Left ventricle myocardium inferior (tissue), 1 donor: ENCODE measurements at regions of chr2 and their contacts with region 1.

Region 1: DNA sequence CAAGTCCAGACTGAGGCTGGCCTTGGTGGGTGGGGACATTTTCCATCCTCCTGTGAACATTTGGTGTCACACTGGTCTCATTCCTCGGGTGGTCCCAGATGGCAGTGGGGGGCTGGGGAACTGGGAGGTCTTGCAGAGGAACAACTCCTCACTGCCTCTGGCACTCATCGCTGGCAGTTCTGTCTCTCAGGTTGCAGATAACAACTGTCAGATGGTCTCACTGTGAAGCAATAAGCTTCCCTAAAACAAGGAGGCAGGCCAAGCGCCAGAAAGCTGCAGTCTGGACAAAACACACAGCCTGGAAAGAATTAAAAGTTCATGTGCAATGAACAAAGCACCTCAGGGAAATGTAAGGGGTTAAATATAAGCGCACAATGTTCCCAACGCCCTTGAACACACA is 78.1 kb downstream of the IRS1 start:
- DNase-seq: peak; percentile 57
- H3K4me3 ChIP-seq: no peak overlapping the region
- H3K27ac ChIP-seq: no peak overlapping the region
- H3K4me1 ChIP-seq: peaks cover 35% of the 10 kb centered on the region
- H3K27me3 ChIP-seq: no peaks in the 10 kb centered on the region
- CTCF ChIP-seq: no peak

Region 2: GRCh38 chr2:226782092-226782713 is 60.7 kb after region 1 on chr2:
- intact Hi-C with region 1: loop called (anchors 10 kb)
- DNase-seq: no peak
- H3K4me3 ChIP-seq: no peak overlapping the region
- H3K27ac ChIP-seq: peak overlapping the region; percentile 59
- H3K4me1 ChIP-seq: peaks cover 55% of the 10 kb centered on the region
- H3K27me3 ChIP-seq: no peaks in the 10 kb centered on the region
- CTCF ChIP-seq: no peak

Region 3: GRCh38 chr2:226845386-226846116 is 124.0 kb after region 1 on chr2:
- intact Hi-C with region 1: no loop called
- DNase-seq: no peak
- H3K4me3 ChIP-seq: no peak overlapping the region
- H3K27ac ChIP-seq: no peak overlapping the region
- H3K4me1 ChIP-seq: peaks cover 15% of the 10 kb centered on the region
- H3K27me3 ChIP-seq: no peaks in the 10 kb centered on the region
- CTCF ChIP-seq: no peak